Lower leg skin (tissue), 4 donors: ENCODE measurements at regions of chr1 and their contacts with region 1.

Region 1: DNA sequence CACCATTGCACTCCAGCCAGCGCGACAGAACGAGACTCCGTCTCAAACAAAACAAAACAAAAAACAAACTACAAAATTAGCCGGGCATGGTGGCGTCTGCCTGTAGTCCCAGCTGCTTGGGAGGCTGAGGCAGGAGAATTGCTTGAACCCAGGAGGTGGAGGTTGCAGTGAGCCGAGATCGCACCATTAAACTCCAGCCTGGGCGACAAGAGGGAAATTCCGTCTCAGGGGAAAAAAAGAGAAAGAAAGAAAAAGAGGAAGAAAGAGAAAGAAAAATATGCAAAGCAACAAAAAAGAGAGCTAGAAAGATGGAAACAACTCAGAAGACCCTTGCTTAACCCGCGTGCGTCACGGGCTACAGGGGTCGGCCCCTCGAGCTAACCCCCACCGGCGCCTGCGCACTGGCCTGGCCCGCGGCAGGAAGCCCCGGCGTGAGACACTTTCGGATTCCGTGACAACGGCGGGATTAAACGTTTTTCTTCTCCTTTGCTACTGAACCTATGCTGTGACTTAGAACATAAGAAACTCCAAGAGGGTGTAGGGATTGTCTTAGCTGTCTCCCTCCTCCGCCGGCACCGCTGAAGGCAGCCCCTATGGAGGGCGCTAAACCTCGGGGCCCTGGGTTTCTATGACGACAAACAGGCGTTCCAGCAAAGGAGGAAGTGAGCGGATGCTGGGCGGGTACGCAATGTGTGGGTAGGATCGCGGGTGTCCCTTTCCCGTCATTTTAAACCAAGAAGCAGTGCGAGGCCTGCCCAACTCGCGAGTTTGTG is at the start of gene AXDND1:
- DNase-seq: peak; percentile 86 to 96
- H3K4me3 ChIP-seq: peak within 1 kb of the TSS; percentile 47
- CTCF ChIP-seq: no peak
- POLR2A ChIP-seq: no peak
- total RNA-seq, gene AXDND1: 0.39 TPM in 1 of 4 donors, not detected in the others

Region 2: DNA sequence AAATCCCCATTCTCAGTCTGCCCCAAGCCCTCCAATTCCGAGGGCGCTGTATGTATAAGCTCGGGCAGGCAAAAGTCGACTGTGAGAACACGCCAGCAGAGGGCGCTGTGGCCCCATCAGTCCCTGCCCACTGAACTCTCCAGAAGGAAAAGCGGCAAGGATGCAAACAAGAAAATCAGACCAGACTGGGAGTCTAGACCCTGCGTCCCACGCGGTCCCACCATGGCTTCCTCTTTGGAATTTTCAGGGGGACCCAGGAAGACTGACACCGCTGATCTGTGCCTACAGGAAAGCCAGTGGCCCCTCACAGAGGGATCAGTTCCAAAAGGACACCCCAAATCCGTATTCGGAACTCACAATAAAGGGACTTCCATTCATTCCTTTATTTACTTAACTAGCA is 833.1 kb before region 1 on chr1:
- intact Hi-C with region 1: loop called (anchors 10 kb)
- DNase-seq: peak; percentile 80 to 97
- H3K4me3 ChIP-seq: no peak overlapping the region
- CTCF ChIP-seq: peak in 1 of 3 donors; percentile 81
- POLR2A ChIP-seq: no peak

Region 3: GRCh38 chr1:179077396-179077795 is 288.1 kb before region 1 on chr1:
- intact Hi-C with region 1: loop called (anchors 5 kb)
- DNase-seq: no peak
- H3K4me3 ChIP-seq: no peak overlapping the region
- CTCF ChIP-seq: no peak
- POLR2A ChIP-seq: no peak

Region 4: DNA sequence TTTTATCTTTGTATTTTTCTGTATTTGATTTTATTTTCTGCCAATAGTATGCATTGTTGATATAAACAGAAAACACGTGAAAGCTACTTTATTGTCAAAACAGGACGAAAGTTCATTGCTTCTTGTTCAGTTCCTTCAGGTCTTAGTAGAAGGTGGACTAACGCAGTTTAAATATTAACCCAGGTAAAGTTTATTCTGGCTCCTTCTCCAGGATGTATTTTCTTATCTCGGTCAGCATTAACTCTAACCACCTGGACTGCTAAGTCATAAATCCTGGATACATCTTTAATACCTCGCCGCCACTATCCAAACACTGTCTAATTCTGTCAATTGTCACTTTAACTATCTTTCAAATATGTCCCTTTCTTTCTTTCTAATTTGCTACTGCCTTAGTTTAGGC is 77.6 kb before region 1 on chr1:
- intact Hi-C with region 1: loop called (anchors 10 kb)
- DNase-seq: no peak
- H3K4me3 ChIP-seq: no peak overlapping the region
- CTCF ChIP-seq: no peak
- POLR2A ChIP-seq: no peak